PC-3 (cell line): ENCODE measurements at regions of chr10 and their contacts with region 1.

Region 1: GRCh38 chr10:28569506-28570159 is 36.7 kb downstream of the WAC start:
- DNase-seq: peak; percentile 9
- ATAC-seq: no peak; the same call in 1 of the 2 replicates
- H3K4me3 ChIP-seq: no peak overlapping the region
- H3K27ac ChIP-seq: no peak overlapping the region
- H3K4me1 ChIP-seq: no peaks in the 10 kb centered on the region
- H3K27me3 ChIP-seq: no peaks in the 10 kb centered on the region
- CTCF ChIP-seq: no peak

Region 2: DNA sequence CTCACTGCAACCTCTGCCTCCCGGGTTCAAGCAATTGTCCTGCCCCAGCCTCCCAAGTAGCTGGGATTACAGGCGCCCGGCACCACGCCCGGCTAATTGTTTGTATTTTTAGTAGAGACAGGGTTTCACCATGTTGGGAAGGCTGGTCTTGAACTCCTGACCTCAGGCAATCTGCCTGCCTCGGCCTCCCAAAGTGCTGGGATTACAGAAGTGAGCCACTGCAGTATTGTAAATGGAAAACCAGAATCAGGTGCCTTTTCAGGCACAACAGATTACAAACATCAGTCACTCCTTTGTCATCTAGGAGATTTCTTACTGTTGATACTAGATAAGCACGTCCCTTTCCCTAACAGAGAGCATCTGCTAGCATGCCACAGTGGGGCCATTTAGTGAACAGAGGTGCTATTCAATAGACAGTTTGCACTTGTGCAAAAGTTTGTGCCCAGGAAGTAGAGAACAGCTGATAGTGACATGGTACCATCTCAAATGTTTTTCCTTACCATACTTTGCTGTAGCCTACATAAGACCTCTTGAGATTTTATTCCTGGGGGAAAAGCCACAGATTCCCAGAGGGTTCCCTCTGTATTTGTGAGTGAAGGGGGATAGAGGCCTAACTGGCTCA is 61.2 kb before region 1 on chr10:
- CTCF ChIA-PET with region 1: no interaction called
- POLR2A ChIA-PET with region 1: interaction called, 10 read pairs
- intact Hi-C with region 1: no loop called
- DNase-seq: no peak
- ATAC-seq: no peak
- H3K4me3 ChIP-seq: no peak overlapping the region
- H3K27ac ChIP-seq: no peak overlapping the region
- H3K4me1 ChIP-seq: 0 out of 2 replicates have a peak, but pooled peaks cover 1% of the 10 kb centered on the region
- H3K27me3 ChIP-seq: no peaks in the 10 kb centered on the region
- CTCF ChIP-seq: no peak

Region 3: GRCh38 chr10:28624351-28624750 is 54.7 kb after region 1 on chr10:
- CTCF ChIA-PET with region 1: no interaction called
- POLR2A ChIA-PET with region 1: no interaction called
- intact Hi-C with region 1: no loop called
- DNase-seq: no peak
- ATAC-seq: no peak
- H3K4me3 ChIP-seq: no peak overlapping the region
- H3K27ac ChIP-seq: no peak overlapping the region
- H3K4me1 ChIP-seq: peaks cover 6% of the 10 kb centered on the region; the same call in 1 of the 2 replicates
- H3K27me3 ChIP-seq: no peaks in the 10 kb centered on the region
- CTCF ChIP-seq: no peak